ENCODE measurements at regions of chr19 and their contacts with region 1.

Region 1: GRCh38 chr19:45643024-45643926 is 4.1 kb upstream of the EML2 start:
- DNase-seq: no peak
- H3K4me3 ChIP-seq: peak overlapping the region; percentile 25; the same call in 1 of the 2 replicates
- CTCF ChIP-seq: peak; percentile 99

Region 2: DNA sequence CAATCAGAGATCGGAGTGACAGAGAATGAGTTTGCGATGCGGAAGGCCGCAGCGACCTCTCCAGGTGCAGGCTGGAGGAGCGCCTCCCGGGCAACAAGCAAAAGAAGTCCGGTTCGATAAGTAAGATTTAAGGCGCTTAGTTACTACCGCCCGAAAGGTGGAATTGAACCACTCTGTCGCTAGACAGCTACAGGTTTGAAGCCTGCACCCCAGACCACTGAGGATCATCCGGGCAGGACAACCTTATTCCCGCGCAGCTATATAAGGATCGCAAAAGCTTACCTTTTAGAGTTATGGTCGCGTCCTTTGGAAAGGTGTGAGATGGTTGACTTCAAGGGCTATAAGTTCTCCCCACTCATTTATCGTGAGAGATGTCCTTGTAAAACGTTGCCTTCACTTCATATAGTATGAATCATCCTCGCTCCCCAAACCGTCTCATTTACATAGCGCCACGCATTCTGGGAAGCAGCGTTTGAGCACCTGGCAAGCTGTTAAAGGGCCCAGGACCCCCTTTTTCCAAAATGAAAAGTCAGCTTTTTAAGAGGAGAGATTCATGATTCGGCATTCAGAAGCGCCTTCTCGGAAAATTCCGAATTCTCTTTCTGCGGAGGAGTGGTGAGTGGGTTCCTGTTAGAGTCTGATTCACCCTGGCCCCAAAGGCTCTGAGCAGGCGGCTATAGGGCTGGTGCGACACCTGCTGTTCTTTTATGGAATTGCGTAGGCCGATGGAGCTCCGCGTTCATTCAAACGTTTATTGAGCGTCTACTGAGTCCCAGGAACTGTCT is 164.6 kb before region 1 on chr19:
- CTCF ChIA-PET with region 1: interaction called, 12 read pairs
- POLR2A ChIA-PET with region 1: no interaction called
- DNase-seq: no peak
- H3K4me3 ChIP-seq: peak overlapping the region; percentile 63
- CTCF ChIP-seq: peak; percentile 87

Region 3: DNA sequence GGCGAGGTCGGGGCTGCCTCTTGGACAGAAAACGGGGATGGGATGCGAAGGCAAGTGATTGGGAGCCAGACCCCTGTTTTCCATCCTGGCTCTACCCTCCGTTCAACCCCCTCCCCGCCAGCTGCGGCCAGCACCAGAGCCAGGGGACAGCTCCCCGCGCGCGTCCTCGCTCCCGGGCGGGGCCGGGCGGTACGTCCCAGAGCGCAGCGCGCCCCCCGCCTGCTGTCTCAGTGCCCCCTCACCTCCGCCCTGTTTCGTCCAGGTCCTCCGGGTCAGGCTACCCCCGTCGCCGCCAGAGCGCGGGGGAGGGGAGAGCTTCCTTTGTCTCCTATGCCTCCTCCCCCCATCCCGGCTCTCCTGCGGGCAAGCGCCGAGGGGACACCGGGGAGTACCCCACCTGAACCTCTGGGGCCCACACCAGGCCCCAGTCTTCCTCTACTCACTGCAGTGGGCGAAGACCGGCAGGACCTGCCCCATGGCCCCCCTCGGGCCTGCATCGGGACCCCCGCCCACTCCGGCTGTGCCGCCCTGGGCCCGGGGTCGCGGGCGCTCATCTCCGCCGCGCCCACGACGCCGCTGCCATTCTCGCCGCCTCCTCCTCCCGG is 146.8 kb before region 1 on chr19:
- CTCF ChIA-PET with region 1: interaction called, 24 read pairs
- POLR2A ChIA-PET with region 1: no interaction called
- DNase-seq: no peak
- H3K4me3 ChIP-seq: peak overlapping the region; percentile 69
- CTCF ChIP-seq: no peak

Region 4: GRCh38 chr19:45598267-45599001 is 44.8 kb before region 1 on chr19:
- CTCF ChIA-PET with region 1: interaction called, 86 read pairs
- POLR2A ChIA-PET with region 1: no interaction called
- DNase-seq: no peak
- H3K4me3 ChIP-seq: no peak overlapping the region
- CTCF ChIP-seq: no peak

Region 5: GRCh38 chr19:45615795-45616708 is 27.2 kb before region 1 on chr19:
- CTCF ChIA-PET with region 1: interaction called, 69 read pairs
- POLR2A ChIA-PET with region 1: interaction called, 5 read pairs
- DNase-seq: no peak
- H3K4me3 ChIP-seq: no peak overlapping the region
- CTCF ChIP-seq: no peak

Region 6: GRCh38 chr19:45681391-45682015 is 38.2 kb after region 1 on chr19:
- CTCF ChIA-PET with region 1: interaction called, 28 read pairs
- POLR2A ChIA-PET with region 1: no interaction called
- DNase-seq: no peak
- H3K4me3 ChIP-seq: peak overlapping the region; percentile 43
- CTCF ChIP-seq: peak; percentile 95

Region 7: GRCh38 chr19:45798995-45799517 is 155.8 kb after region 1 on chr19:
- CTCF ChIA-PET with region 1: interaction called, 13 read pairs
- POLR2A ChIA-PET with region 1: no interaction called
- DNase-seq: peak; percentile 54
- H3K4me3 ChIP-seq: no peak overlapping the region
- CTCF ChIP-seq: peak; percentile 76